Activated CD4-positive, alpha-beta T cell treated with anti-CD3 and anti-CD28 coated beads for 36 hours (primary cell): ENCODE measurements at regions of chr17 and their contacts with region 1.

Region 1: GRCh38 chr17:14069251-14070021 is at the start of gene COX10:
- DNase-seq: peak; percentile 91
- ATAC-seq: peak; percentile 93
- H3K4me3 Mint-ChIP-seq: peak within 1 kb of the TSS; percentile 94
- H3K27ac Mint-ChIP-seq: peak within 1 kb of the TSS; percentile 94
- H3K4me1 Mint-ChIP-seq: peaks cover 54% of the 10 kb centered on the region
- H3K27me3 Mint-ChIP-seq: no peaks in the 10 kb centered on the region
- total RNA-seq, gene COX10: 22.0 to 32.5 TPM

Region 2: GRCh38 chr17:13986855-13987254 is 82.6 kb before region 1 on chr17:
- CTCF ChIA-PET with region 1: no interaction called
- POLR2A ChIA-PET with region 1: no interaction called
- intact Hi-C with region 1: no loop called
- DNase-seq: no peak
- ATAC-seq: no peak
- H3K4me3 Mint-ChIP-seq: no peak overlapping the region
- H3K27ac Mint-ChIP-seq: no peak overlapping the region
- H3K4me1 Mint-ChIP-seq: no peaks in the 10 kb centered on the region
- H3K27me3 Mint-ChIP-seq: no peaks in the 10 kb centered on the region

Region 3: DNA sequence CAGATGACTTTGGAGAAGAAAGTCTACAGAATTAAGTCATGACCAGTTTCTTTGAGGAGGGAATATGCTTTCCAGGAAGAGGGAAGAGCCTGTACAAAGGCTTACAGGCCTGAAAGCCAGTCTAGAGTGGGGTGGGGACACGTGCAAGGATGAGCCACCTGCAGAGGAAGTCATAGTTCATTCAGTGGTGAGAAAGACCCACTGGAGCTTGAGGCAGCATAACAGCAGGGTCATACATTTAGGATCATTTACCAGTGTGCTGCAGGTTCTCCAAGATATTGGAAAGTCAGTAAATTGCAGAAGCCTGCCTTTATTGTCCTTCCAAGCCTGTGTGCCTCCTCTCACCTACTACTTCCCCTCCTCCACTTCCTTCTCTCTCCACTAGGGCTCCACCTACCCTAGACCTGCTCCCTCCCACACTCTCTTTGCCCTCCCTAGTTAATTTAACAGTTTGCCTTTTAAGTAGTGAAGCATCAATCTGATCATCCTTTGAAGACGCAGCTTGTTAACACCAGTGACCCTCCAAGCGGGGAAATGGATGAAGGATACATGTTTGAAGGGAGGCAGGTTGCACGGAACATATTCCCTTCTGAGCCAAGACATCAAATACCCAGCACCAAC is 127.1 kb after region 1 on chr17:
- CTCF ChIA-PET with region 1: no interaction called
- POLR2A ChIA-PET with region 1: no interaction called
- intact Hi-C with region 1: loop called in 1 of 2 experiments (anchors 5 kb)
- DNase-seq: no peak
- ATAC-seq: peak; percentile 19
- H3K4me3 Mint-ChIP-seq: no peak overlapping the region
- H3K27ac Mint-ChIP-seq: peak overlapping the region; percentile 68
- H3K4me1 Mint-ChIP-seq: peaks cover 85% of the 10 kb centered on the region
- H3K27me3 Mint-ChIP-seq: no peaks in the 10 kb centered on the region